ENCODE measurements at regions of chr21 and their contacts with region 1.

Region 1: GRCh38 chr21:14454016-14455009 is 71.4 kb upstream of the HSPA13 start:
- DNase-seq: peak; percentile 80 to 93 (median 83)
- ATAC-seq: peak; percentile 69
- H3K4me3 ChIP-seq: no peak overlapping the region
- H3K27ac ChIP-seq: peak overlapping the region; percentile 91
- H3K4me1 ChIP-seq: peaks cover 17 to 54% of the 10 kb centered on the region in 2 experiments
- H3K27me3 ChIP-seq: no peaks in the 10 kb centered on the region
- CTCF ChIP-seq: no peak
- EP300 ChIP-seq: peak; percentile 98
- POLR2A ChIP-seq: no peak
- RAD21 ChIP-seq: peak; percentile 3 to 15; a peak in 2 of 4 replicates

Region 2: DNA sequence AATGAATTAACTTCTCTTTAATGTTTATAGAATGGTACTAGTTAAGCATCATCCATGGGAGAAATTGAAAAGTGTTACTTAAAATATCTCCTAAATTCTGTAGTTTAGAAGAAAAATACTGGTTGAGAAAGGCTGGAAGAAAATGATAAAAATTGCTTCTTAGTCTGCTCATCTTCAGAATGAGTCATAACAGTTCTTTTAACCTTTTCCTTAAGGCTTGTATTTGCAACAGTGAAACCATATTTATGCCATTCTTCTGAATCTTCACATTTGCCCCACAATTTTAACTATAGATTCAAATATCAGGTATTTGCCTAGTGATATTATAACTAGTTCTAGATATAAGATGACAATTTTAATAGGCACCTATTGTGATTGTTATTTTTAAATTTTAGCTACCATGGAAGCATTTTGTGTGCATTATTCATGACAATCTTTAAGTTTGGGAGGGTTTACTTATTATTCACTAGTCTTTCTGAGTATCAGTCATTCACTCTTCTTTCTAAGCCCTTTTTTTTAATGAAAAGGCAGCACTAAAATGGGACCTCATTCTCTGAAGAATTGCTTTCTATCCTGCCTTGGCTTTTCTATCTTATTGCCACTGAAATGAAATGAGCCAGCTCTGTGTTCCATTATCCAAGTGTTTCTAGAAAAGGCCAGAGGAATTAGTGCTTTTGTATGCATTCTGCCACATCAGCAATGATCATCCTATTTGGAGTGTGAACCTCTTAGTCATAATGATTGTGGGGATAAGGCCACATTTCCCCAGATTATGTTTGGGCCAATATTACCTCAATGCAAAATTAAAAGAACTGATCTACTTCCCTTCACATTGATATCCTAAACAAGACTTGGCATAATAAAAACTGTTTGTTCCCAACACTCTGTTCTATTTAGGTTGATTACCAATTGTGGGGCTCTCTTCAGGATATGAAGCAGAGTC is 33.4 kb after region 1 on chr21:
- CTCF ChIA-PET with region 1: no interaction called
- POLR2A ChIA-PET with region 1: no interaction called
- in situ Hi-C with region 1: no loop called
- intact Hi-C with region 1: loop called (anchors 5 kb)
- DNase-seq: no peak
- ATAC-seq: no peak
- H3K4me3 ChIP-seq: no peak overlapping the region
- H3K27ac ChIP-seq: peak overlapping the region; percentile 42; the same call in 1 of the 3 replicates
- H3K4me1 ChIP-seq: peaks cover 5 to 36% of the 10 kb centered on the region in 2 experiments
- H3K27me3 ChIP-seq: no peaks in the 10 kb centered on the region
- CTCF ChIP-seq: no peak
- EP300 ChIP-seq: no peak
- POLR2A ChIP-seq: no peak; the same call in 1 of the 2 replicates
- RAD21 ChIP-seq: no peak

Region 3: DNA sequence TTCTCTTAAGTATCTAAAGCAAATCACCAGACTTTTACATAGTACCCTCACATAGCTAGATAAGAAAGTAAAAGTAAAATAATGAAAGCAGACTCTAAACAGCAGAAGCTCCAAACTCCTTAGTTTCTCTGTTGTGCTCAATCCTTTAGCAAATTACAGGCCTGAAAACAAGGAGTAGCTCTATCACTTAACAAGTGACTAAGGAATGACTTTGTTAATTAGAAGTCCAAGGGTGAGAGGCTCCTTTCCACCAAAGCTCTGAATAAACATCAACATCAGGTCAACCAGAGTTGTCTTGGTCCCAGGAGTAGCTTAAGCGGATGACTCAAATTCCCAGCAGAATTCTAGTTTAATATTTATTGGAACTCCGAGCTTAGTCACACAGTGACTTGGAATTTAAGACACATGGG is 604.5 kb after region 1 on chr21:
- CTCF ChIA-PET with region 1: no interaction called
- POLR2A ChIA-PET with region 1: no interaction called
- in situ Hi-C with region 1: no loop called
- intact Hi-C with region 1: loop called (anchors 2 kb)
- DNase-seq: peak; percentile 25 to 66 (median 32)
- ATAC-seq: peak; percentile 47
- H3K4me3 ChIP-seq: no peak overlapping the region
- H3K27ac ChIP-seq: peak overlapping the region; percentile 51
- H3K4me1 ChIP-seq: peaks cover 3 to 27% of the 10 kb centered on the region in 2 experiments; a peak in 4 of 5 replicates
- H3K27me3 ChIP-seq: no peaks in the 10 kb centered on the region
- CTCF ChIP-seq: no peak
- EP300 ChIP-seq: no peak
- POLR2A ChIP-seq: no peak
- RAD21 ChIP-seq: no peak

Measured in K562 (cell line).